ENCODE measurements at regions of chr19 and their contacts with region 1.

Region 1: DNA sequence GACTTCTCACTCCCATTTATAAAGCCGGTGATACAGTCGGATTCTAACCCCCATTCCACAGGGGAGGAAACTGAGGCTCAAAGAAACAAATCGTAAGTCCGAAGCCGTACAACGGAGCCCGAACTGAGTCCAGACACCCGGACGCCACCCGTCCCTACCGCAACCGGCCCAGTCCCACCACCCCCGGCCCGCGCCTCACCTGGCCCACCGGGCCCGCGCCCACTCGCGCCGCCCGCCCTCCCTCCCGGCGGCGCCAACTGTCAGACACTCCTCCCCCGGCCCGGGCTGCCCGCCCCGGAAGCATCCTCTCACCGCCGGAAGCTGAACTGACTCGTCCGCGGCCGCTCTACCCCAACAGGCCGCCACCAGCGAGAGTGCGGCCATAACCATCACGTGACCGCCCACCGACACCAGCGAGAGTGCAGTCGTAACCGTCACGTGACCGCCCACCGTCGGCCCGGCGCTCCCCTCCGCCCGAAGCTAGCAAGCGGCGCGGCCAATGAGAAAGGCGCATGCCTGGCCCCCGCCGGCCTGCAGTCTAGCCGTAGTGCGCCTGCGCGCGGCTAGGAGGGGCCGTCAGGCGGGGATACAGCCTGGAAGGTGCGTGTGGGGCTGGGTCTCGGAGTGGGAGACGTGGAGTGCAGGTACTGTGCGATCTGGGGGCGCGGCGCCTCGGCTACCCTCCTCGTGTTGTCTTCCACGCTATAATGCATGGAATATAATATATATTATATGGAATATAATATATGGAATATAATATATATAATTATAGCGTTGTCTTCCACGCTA is at the starts of genes C19orf47 and PLD3:
- DNase-seq: peak; percentile 100
- ATAC-seq: peak; percentile 98
- total RNA-seq, gene C19orf47: 209 TPM
- total RNA-seq, gene PLD3: 159 TPM

Region 2: DNA sequence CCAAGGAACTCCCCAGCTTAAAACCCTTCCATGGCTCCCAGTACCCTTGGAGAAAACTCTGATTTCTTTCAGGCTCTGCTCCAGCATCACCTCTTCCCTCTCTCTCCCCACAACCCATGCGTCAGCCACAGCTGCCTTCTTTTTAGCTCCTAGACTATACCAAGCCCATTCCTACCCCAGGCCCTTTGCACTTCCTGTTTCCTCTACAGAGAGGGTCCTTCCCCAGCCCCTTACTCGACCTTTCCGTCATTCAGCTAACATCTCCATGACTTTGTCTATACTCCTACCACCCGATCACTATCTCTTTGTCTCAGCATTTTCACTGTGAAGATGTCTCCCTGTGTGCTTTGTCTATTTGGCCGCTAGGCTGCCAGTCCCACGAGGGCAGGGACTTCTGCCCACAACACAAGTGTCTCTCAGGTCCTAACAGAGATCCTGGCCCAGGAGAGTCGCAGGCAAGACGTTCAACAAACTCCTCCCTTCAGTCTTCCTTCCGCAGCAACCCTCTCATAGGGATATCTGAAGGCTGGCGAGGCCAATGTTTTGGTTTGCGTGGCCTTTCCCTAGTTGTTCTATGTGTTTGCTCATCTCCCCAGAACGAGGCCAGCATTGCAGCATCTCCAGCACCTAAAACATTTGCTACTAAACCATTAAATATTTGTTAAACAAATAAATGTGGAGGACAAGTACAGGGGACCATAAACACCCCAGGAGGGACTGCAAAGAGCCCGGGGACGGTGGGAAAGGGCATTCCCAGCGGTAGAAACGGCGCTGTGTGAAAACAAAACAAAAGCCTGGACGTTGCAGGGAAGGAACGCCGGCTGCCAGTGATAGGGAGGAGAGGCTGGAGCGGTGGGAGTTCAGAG is 122.6 kb before region 1 on chr19:
- intact Hi-C with region 1: no loop called
- DNase-seq: no peak
- ATAC-seq: no peak

Region 3: GRCh38 chr19:40444192-40445028 is 96.1 kb after region 1 on chr19 and contains the start of gene SERTAD3:
- intact Hi-C with region 1: loop called (anchors 10 kb)
- DNase-seq: peak; percentile 99
- ATAC-seq: peak; percentile 89
- total RNA-seq, gene SERTAD3: 22.7 TPM

Measured in Right ventricle myocardium superior (tissue), 1 donor.